Esophagus muscularis mucosa (tissue), 4 donors: ENCODE measurements at regions of chr2 and their contacts with region 1.

Region 1: GRCh38 chr2:3575534-3576262 is 638 bp downstream of the RPS7 start:
- DNase-seq: no peak
- H3K4me3 ChIP-seq: peak overlapping the region; percentile 71 to 87 (median 80)
- H3K27ac ChIP-seq: peak overlapping the region; percentile 86 to 93 (median 89)
- H3K4me1 ChIP-seq: peaks cover 35 to 59% (median 45%) of the 10 kb centered on the region in 4 donors
- H3K27me3 ChIP-seq: no peaks in the 10 kb centered on the region
- CTCF ChIP-seq: no peak
- EP300 ChIP-seq: no peak
- POLR2A ChIP-seq: no peak

Region 2: DNA sequence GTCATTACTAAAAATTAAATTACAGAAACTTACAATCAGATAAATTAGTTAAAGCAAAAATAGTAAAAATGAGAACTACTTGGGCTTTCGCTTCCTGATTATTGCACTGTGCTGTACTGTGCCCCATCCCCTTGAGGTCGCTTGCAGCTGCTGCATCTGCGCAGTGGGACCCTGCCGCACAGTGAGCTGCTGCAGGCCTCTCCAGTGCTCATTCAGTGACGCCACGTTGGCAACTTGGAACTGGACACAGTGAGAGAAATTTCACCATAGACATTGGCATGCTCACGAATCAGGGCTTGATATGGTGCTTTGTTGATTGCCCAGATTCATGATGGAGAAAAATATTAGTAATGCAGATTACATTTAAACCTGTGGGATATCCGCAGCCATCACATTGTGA is 953.8 kb before region 1 on chr2:
- intact Hi-C with region 1: no loop called
- DNase-seq: peak; percentile 83
- H3K4me3 ChIP-seq: no peak overlapping the region
- H3K27ac ChIP-seq: no peak overlapping the region
- H3K4me1 ChIP-seq: peaks cover 0 to 8% (median 0%) of the 10 kb centered on the region in 4 donors
- H3K27me3 ChIP-seq: no peaks in the 10 kb centered on the region
- CTCF ChIP-seq: no peak
- EP300 ChIP-seq: no peak
- POLR2A ChIP-seq: no peak

Region 3: GRCh38 chr2:3379647-3380534 is 195.8 kb before region 1 on chr2 and contains the start of gene TRAPPC12:
- intact Hi-C with region 1: loop called (anchors 5 kb)
- DNase-seq: peak; percentile 98
- H3K4me3 ChIP-seq: peak within 1 kb of the TSS; percentile 74 to 90 (median 86)
- H3K27ac ChIP-seq: peak within 1 kb of the TSS; percentile 87 to 94 (median 91)
- H3K4me1 ChIP-seq: peaks cover 27 to 43% (median 42%) of the 10 kb centered on the region in 4 donors
- H3K27me3 ChIP-seq: no peaks in the 10 kb centered on the region
- CTCF ChIP-seq: peak; percentile 34 to 45 (median 44)
- EP300 ChIP-seq: no peak
- POLR2A ChIP-seq: peak; percentile 60
- total RNA-seq, gene TRAPPC12: 65.6 to 89.3 (median 72.6) TPM

Region 4: GRCh38 chr2:3518496-3519254 is 57.0 kb before region 1 on chr2:
- intact Hi-C with region 1: loop called (anchors 5 kb)
- DNase-seq: peak; percentile 98
- H3K4me3 ChIP-seq: peak overlapping the region; percentile 86 to 96 (median 91)
- H3K27ac ChIP-seq: peak overlapping the region; percentile 99 to 100 (median 100)
- H3K4me1 ChIP-seq: peaks cover 20 to 55% (median 47%) of the 10 kb centered on the region in 4 donors
- H3K27me3 ChIP-seq: no peaks in the 10 kb centered on the region
- CTCF ChIP-seq: no peak
- EP300 ChIP-seq: no peak
- POLR2A ChIP-seq: peak; percentile 56

Region 5: GRCh38 chr2:3558205-3559014 is 17.3 kb before region 1 on chr2 and contains the start of gene RNASEH1:
- intact Hi-C with region 1: loop called (anchors 2 kb)
- DNase-seq: peak; percentile 99
- H3K4me3 ChIP-seq: peak within 1 kb of the TSS; percentile 83 to 92 (median 86)
- H3K27ac ChIP-seq: peak within 1 kb of the TSS; percentile 88 to 96 (median 96)
- H3K4me1 ChIP-seq: peaks cover 19 to 24% (median 21%) of the 10 kb centered on the region in 4 donors
- H3K27me3 ChIP-seq: no peaks in the 10 kb centered on the region
- CTCF ChIP-seq: no peak
- EP300 ChIP-seq: no peak
- POLR2A ChIP-seq: peak; percentile 79
- total RNA-seq, gene RNASEH1: 30.2 to 36.5 (median 34.5) TPM